ENCODE measurements at regions of chr17 and their contacts with region 1.

Region 1: GRCh38 chr17:31269578-31269983 is 27.5 kb downstream of the OMG start:
- DNase-seq: no peak
- ATAC-seq: no peak
- H3K4me3 ChIP-seq: no peak overlapping the region
- H3K4me3 Mint-ChIP-seq: no peak overlapping the region
- H3K27ac ChIP-seq: no peak overlapping the region
- H3K27ac Mint-ChIP-seq: no peak overlapping the region
- H3K4me1 ChIP-seq: no peaks in the 10 kb centered on the region
- H3K4me1 Mint-ChIP-seq: peaks cover 6% of the 10 kb centered on the region
- H3K27me3 ChIP-seq: no peaks in the 10 kb centered on the region
- H3K27me3 Mint-ChIP-seq: no peaks in the 10 kb centered on the region
- CTCF ChIP-seq: no peak

Region 2: DNA sequence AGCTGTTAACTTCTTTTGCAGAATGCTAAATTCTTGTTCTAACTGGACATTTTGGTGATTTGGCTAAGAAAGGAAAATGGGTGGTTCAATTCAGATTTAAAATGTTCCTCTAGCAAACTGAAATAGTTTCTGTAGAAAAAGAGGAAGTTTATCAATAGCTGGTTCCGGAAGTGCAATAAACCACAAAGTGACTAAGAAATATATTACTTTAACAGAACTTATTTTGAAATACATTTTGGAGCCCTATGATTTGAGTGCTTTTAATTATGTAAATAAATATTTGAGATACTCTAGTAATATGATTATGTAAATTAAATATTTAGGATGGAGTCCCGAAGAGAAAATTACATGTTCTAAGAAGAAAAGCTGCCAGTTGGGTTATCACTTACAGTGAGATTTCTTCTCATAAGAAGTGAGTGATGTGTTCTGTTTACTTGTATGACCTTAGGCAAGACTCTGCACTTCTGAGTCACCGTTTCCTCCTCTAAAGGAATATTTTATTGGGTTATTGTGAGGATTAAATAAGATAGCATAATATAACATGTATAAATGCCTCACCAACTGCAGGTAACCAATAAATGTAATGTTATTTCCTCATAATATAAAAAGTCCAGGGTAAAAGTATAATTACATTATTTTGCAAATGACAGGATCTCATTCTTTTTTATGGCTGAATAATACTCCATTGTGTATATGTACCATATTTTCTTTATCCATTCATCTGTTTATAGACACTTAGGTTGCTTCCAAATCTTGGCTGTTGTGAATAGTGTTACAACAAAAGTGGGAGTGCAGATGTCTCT is 44.6 kb after region 1 on chr17 and contains the start of gene EVI2B:
- CTCF ChIA-PET with region 1: interaction called, 7 read pairs
- POLR2A ChIA-PET with region 1: interaction called, 10 read pairs
- intact Hi-C with region 1: no loop called
- DNase-seq: peak in 4 of 14 experiments; percentile 40 to 83 (median 74)
- ATAC-seq: peak; percentile 39
- H3K4me3 ChIP-seq: peak within 1 kb of the TSS; percentile 67
- H3K4me3 Mint-ChIP-seq: peak within 1 kb of the TSS; percentile 92
- H3K27ac ChIP-seq: peak within 1 kb of the TSS; percentile 47 to 77
- H3K27ac Mint-ChIP-seq: peak within 1 kb of the TSS; percentile 97
- H3K4me1 ChIP-seq: peaks cover 5% of the 10 kb centered on the region
- H3K4me1 Mint-ChIP-seq: peaks cover 60% of the 10 kb centered on the region
- H3K27me3 ChIP-seq: no peaks in the 10 kb centered on the region
- H3K27me3 Mint-ChIP-seq: no peaks in the 10 kb centered on the region
- CTCF ChIP-seq: no peak
- total RNA-seq, gene EVI2B: 99.1 to 102 TPM

Region 3: DNA sequence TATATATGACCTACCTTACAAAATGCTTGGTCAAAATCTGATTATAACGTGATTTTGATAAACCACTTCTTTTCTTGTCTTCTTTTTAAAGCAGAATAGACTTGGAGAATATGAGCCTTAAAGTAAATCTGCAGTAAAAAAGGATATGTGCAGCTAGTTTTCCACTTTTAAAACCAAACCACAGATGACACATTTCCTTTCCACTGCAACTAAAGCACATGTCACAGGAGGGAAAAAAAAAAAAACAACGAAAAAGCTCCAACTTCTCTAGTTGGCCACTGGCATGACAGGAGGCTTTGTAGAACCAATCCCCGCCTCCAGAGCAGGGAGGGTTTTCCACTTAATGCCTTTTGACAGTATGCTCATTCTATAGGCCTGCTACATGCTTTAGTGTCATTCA is 51.9 kb after region 1 on chr17 and contains the start of gene EVI2A:
- CTCF ChIA-PET with region 1: no interaction called
- POLR2A ChIA-PET with region 1: interaction called, 4 read pairs
- intact Hi-C with region 1: loop called (anchors 1 to 10 kb)
- DNase-seq: peak; percentile 52 to 95 (median 65)
- ATAC-seq: peak; percentile 85
- H3K4me3 ChIP-seq: peak within 1 kb of the TSS; percentile 82
- H3K4me3 Mint-ChIP-seq: peak within 1 kb of the TSS; percentile 91
- H3K27ac ChIP-seq: peak within 1 kb of the TSS; percentile 83 to 87
- H3K27ac Mint-ChIP-seq: peak within 1 kb of the TSS; percentile 93
- H3K4me1 ChIP-seq: peaks cover 7% of the 10 kb centered on the region
- H3K4me1 Mint-ChIP-seq: peaks cover 45% of the 10 kb centered on the region
- H3K27me3 ChIP-seq: no peaks in the 10 kb centered on the region
- H3K27me3 Mint-ChIP-seq: no peaks in the 10 kb centered on the region
- CTCF ChIP-seq: no peak
- total RNA-seq, gene EVI2A: 37.8 to 38.4 TPM

Region 4: DNA sequence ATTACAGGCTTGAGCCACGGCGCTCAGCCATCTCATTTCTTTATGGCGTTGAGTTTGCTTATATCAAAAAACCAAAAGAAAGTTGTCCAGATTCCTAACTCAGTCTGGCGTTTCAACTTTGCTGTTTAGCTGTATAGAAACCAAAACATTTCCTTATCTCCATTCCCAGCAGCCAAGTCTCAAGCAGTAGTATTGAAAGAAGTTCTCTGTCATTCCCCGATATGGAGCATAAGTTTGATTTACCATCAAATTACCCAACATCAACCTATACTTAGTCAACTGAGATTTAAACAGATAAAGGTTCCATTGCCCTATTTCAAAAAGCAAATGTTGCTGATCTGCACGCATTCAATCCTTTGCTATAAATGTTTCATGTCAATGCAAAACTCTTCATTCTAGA is 94.4 kb after region 1 on chr17:
- CTCF ChIA-PET with region 1: no interaction called
- POLR2A ChIA-PET with region 1: interaction called, 4 read pairs
- intact Hi-C with region 1: loop called in 1 of 2 experiments (anchors 2 kb)
- DNase-seq: no peak
- ATAC-seq: no peak
- H3K4me3 ChIP-seq: no peak overlapping the region
- H3K4me3 Mint-ChIP-seq: no peak overlapping the region
- H3K27ac ChIP-seq: no peak overlapping the region
- H3K27ac Mint-ChIP-seq: no peak overlapping the region
- H3K4me1 ChIP-seq: no peaks in the 10 kb centered on the region
- H3K4me1 Mint-ChIP-seq: no peaks in the 10 kb centered on the region
- H3K27me3 ChIP-seq: no peaks in the 10 kb centered on the region
- H3K27me3 Mint-ChIP-seq: no peaks in the 10 kb centered on the region
- CTCF ChIP-seq: no peak

Measured in CD4-positive, alpha-beta T cell (primary cell).